H1 (cell line): ENCODE measurements at regions of chr1 and their contacts with region 1.

Region 1: DNA sequence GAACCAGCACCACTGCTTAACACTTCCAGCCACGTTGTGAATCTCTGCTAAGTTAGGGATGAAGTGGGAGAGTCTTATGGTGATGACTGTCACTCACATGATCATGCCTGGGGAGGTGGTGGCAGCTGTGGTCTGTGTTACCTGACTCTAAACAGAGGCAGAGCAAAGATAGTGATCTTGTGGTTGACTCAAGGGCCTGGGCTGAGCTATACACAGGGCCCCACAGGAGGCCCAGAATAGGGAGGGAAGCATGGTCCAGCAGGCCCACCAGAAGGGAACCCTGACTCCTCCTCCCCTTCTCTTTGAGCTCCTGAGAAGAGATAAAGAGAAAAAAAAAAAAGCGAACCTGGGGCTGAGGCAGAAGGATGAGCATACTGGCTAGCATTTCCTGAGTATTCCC is 55.0 kb downstream of the PLXNA2 start:
- DNase-seq: no peak
- H3K4me3 ChIP-seq: no peak overlapping the region
- H3K27ac ChIP-seq: no peak overlapping the region
- H3K4me1 ChIP-seq: no peaks in the 10 kb centered on the region
- H3K27me3 ChIP-seq: no peaks in the 10 kb centered on the region
- CTCF ChIP-seq: no peak
- EP300 ChIP-seq: no peak
- POLR2A ChIP-seq: no peak
- RAD21 ChIP-seq: no peak

Region 2: GRCh38 chr1:208007938-208008342 is 181.2 kb before region 1 on chr1:
- CTCF ChIA-PET with region 1: no interaction called
- POLR2A ChIA-PET with region 1: no interaction called
- DNase-seq: no peak
- H3K4me3 ChIP-seq: no peak overlapping the region
- H3K27ac ChIP-seq: no peak overlapping the region
- H3K4me1 ChIP-seq: no peaks in the 10 kb centered on the region
- H3K27me3 ChIP-seq: no peaks in the 10 kb centered on the region; a peak in 1 of 7 replicates
- CTCF ChIP-seq: no peak
- EP300 ChIP-seq: no peak
- POLR2A ChIP-seq: no peak
- RAD21 ChIP-seq: no peak

Region 3: DNA sequence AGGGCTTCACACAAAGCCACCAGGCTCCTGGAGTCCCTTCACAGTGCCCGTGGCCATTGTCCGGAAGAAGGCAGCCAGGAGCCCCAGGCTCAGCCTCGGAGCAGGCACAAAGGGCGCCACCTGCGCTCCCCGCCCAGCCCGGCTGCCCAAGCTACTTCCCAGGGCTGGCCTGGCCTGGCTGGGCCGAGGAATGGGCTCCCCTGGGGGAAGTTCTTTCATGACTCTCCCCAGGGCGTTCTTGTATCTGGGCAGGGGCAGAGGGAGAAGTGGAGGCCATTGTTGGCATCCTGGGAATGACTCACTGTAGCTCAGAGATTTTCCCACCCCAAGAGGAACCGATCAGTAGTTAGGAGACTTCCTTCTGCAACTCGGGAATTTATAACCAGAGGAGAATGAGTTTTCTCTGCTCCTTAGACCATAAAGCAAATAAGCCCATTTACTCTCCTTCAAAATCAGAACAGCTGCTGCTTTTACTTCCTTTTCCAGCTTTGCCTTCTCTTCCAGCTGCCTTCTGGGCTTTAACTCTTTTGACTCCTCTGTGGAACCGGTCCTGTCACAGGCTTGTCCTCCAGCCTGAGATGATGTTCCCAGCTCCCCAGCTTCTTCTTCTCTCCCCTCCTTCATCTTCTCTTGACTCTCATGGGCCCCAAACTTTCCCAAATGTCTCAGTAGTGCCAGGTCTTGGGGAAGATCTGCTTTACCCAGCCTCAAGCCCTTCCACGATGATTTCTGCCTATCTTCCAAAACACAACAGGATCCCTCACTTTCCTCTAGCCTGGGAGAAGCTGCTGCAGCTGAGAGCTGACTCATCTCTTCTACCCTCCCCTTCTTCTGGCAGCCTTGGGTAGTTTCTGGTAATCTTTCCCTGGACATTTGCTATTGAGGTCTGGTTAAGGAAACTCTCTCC is 159.5 kb before region 1 on chr1:
- CTCF ChIA-PET with region 1: interaction called, 58 read pairs
- POLR2A ChIA-PET with region 1: no interaction called
- DNase-seq: no peak
- H3K4me3 ChIP-seq: no peak overlapping the region
- H3K27ac ChIP-seq: no peak overlapping the region
- H3K4me1 ChIP-seq: no peaks in the 10 kb centered on the region
- H3K27me3 ChIP-seq: no peaks in the 10 kb centered on the region
- CTCF ChIP-seq: no peak
- EP300 ChIP-seq: no peak
- POLR2A ChIP-seq: no peak
- RAD21 ChIP-seq: no peak

Region 4: GRCh38 chr1:208036109-208036808 is 152.9 kb before region 1 on chr1:
- CTCF ChIA-PET with region 1: interaction called, 10 read pairs
- POLR2A ChIA-PET with region 1: no interaction called
- DNase-seq: no peak
- H3K4me3 ChIP-seq: no peak overlapping the region
- H3K27ac ChIP-seq: no peak overlapping the region
- H3K4me1 ChIP-seq: peaks cover 0 to 3% (median 0%) of the 10 kb centered on the region in 4 experiments; a peak in 1 of 7 replicates
- H3K27me3 ChIP-seq: no peaks in the 10 kb centered on the region
- CTCF ChIP-seq: peak; percentile 34 to 69 (median 55)
- EP300 ChIP-seq: no peak
- POLR2A ChIP-seq: no peak
- RAD21 ChIP-seq: peak; percentile 60 to 68

Region 5: DNA sequence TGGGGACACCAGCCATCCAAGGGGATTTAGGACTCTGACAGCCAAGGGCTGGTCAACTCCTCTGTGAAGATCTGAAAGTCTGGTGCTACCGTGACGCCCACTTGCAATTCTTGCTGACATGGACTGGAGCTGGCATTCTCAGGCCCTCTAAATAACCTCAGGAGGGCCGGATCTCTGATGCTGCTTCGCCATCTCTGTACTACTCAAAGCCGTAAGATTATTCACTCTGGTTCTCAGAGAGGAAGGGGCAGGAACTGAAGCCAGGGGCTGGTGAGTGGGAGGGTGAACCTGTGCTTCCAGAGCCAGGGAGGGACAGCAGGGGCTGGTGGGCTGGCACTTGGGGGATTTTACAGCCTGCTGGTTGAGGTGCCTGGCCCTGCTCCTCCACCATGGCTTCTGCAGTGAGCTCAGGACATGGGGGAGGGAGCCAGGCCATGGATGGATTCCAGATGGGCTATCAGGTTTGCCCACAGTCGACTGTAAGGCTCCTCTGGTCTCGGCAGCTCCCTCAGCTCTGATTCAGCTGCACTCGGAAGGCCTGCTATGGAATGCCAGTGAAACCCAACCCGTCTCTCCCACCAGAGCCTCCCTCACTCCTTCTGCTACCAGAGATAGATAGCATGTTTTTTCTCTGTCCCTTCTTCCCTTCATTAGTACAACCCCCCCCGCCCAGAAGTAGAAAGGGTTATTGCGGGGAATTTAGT is 29.5 kb before region 1 on chr1:
- CTCF ChIA-PET with region 1: interaction called, 10 read pairs
- POLR2A ChIA-PET with region 1: no interaction called
- DNase-seq: no peak
- H3K4me3 ChIP-seq: no peak overlapping the region
- H3K27ac ChIP-seq: no peak overlapping the region
- H3K4me1 ChIP-seq: peaks cover 4 to 21% (median 16%) of the 10 kb centered on the region in 4 experiments
- H3K27me3 ChIP-seq: 0 out of 7 replicates have a peak, but pooled peaks cover 0 to 4% (median 0%) of the 10 kb centered on the region in 4 experiments
- CTCF ChIP-seq: no peak
- EP300 ChIP-seq: no peak
- POLR2A ChIP-seq: no peak
- RAD21 ChIP-seq: no peak

Region 6: DNA sequence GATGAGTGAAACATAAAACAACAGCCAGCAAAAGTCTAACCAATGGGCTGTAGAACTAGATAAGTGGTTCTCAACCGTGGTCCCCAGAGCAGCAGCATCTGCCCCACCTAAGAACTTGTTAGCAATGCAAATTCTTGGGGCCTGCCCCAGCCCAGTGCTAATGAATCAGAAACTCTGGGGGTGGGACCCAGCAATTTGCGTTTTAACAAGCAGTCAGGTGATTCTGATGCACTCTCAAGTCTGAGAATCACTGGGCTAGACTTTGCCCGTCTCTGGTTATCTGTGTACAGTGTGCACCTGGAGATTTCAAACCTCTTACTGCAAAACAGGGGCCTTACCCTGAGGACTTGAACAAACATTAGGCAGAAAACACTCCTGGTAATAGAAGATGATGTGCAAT is 11.5 kb before region 1 on chr1:
- CTCF ChIA-PET with region 1: interaction called, 18 read pairs
- POLR2A ChIA-PET with region 1: interaction called, 3 read pairs
- DNase-seq: no peak
- H3K4me3 ChIP-seq: no peak overlapping the region
- H3K27ac ChIP-seq: no peak overlapping the region
- H3K4me1 ChIP-seq: peaks cover 11 to 29% (median 14%) of the 10 kb centered on the region in 4 experiments
- H3K27me3 ChIP-seq: no peaks in the 10 kb centered on the region; a peak in 2 of 7 replicates
- CTCF ChIP-seq: no peak
- EP300 ChIP-seq: no peak
- POLR2A ChIP-seq: no peak
- RAD21 ChIP-seq: no peak

Region 7: GRCh38 chr1:208201229-208201628 is 12.0 kb after region 1 on chr1:
- CTCF ChIA-PET with region 1: interaction called, 10 read pairs
- POLR2A ChIA-PET with region 1: no interaction called
- DNase-seq: no peak
- H3K4me3 ChIP-seq: no peak overlapping the region
- H3K27ac ChIP-seq: no peak overlapping the region
- H3K4me1 ChIP-seq: peaks cover 0 to 7% (median 0%) of the 10 kb centered on the region in 4 experiments; a peak in 2 of 7 replicates
- H3K27me3 ChIP-seq: no peaks in the 10 kb centered on the region
- CTCF ChIP-seq: no peak
- EP300 ChIP-seq: no peak
- POLR2A ChIP-seq: no peak
- RAD21 ChIP-seq: no peak

Region 8: DNA sequence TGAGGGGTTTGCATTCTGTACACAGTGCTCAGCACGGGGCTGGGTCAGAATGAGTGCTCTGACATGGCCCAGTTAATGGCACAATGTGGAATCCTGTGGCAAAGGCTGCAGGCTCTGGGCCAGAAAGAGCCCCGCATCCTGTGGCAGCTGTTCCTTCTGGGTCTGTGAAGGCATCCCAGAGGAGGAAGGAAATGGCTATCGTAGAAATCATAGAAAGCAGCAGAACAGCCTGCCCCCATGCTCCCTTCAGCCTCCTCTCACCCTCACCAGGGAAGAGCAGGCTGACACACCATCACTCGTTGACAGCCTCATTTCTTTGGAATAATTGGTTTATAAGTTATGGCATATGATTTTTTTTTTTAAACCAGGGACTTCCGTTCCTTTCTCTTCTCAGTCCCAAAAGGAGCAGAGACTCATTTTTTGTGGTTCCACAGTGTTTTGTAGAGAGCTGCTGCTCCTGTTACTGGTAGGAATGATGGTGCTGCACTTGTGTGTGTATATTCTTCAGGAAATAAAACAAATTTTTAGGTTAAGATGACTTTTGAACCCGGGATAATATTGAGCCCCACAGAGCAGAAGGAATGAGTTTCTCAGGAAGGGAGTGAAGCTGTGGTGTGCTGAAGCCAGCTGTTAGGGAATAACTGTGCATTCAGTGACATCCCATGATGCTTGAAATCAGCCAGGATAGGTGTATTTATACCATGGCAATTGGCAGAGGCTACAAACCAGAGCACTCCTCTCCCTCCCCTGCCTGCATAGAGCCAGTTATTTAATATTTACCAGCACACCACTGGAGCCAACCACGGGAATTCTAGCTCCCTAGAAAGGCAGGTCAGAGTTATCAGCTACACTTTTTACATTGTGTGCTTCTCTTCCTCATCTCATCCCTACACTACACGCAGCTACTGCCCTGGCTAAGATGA is 23.0 kb after region 1 on chr1:
- CTCF ChIA-PET with region 1: interaction called, 11 read pairs
- POLR2A ChIA-PET with region 1: no interaction called
- DNase-seq: no peak
- H3K4me3 ChIP-seq: no peak overlapping the region
- H3K27ac ChIP-seq: no peak overlapping the region
- H3K4me1 ChIP-seq: peaks cover 0 to 2% (median 0%) of the 10 kb centered on the region in 4 experiments; a peak in 1 of 7 replicates
- H3K27me3 ChIP-seq: no peaks in the 10 kb centered on the region
- CTCF ChIP-seq: no peak
- EP300 ChIP-seq: no peak
- POLR2A ChIP-seq: no peak
- RAD21 ChIP-seq: no peak